MCF 10A (cell line): ENCODE measurements at regions of chr6 and their contacts with region 1.

Region 1: DNA sequence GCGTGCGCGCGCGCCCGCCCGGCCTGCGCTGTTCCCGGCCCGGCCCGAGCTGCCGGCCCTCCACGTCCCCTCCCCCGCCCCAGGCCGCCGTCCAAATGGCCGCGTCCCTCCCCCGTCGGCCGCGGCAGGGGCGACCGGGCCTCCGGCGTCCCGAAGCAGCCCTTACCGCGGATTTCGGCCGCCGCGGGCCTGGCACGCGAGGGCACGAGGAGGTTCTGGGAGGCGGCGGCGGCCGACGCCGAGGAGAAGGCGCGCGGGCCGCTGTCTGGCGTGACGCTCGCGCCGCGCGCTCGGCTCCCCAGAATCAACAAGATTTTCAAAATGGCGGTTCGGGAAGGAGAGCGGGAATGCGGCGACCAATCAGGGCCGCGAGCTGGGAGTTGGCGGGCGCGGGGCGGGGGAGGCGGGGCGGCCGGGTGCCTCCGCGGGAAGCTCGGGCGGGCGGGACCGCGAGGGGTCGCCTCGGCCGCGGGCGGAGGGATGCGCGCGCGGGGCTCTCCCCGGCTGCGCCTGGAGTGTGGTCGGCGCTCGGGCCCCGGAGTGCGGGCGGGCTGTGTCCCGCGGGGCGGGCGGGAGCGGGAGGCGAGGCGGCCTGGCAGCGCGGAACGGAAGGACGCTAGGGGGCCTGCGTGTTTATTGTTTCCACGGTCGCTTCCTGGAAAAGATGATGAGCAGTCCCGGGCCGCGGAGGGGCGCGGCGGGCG is at the start of gene DEK:
- DNase-seq: peak; percentile 83
- H3K4me3 Mint-ChIP-seq: peak within 1 kb of the TSS; percentile 96
- H3K27ac Mint-ChIP-seq: peak within 1 kb of the TSS; percentile 81
- H3K4me1 Mint-ChIP-seq: peaks cover 36% of the 10 kb centered on the region
- H3K27me3 Mint-ChIP-seq: no peaks in the 10 kb centered on the region
- CTCF ChIP-seq: peak; percentile 61
- total RNA-seq, gene DEK: 118 and 148 TPM in 2 replicates

Region 2: GRCh38 chr6:18242062-18242851 is 22.1 kb before region 1 on chr6:
- CTCF ChIA-PET with region 1: interaction called, 3 read pairs
- POLR2A ChIA-PET with region 1: interaction called, 65 read pairs
- intact Hi-C with region 1: no loop called
- DNase-seq: peak; percentile 88
- H3K4me3 Mint-ChIP-seq: no peak overlapping the region
- H3K27ac Mint-ChIP-seq: peak overlapping the region; percentile 93
- H3K4me1 Mint-ChIP-seq: peaks cover 23% of the 10 kb centered on the region
- H3K27me3 Mint-ChIP-seq: no peaks in the 10 kb centered on the region
- CTCF ChIP-seq: no peak

Region 3: DNA sequence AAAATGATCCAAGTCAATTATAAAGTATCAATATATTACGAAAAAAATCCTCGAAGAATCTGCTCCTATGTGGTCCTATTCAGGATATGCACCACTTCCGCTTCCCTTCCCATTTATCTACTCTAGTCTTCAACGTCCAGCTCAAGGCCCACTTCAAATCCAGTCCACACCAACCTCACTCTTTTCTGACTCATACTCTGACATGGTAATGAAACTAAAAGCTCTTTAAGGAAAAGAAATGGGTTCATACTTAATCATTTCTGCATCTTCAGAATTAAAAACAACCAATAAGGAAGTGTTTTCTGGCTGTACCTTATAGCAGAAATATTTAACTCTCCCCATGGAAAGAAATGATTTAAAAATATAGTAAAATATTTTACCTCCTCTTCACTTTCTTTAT is 15.1 kb before region 1 on chr6:
- CTCF ChIA-PET with region 1: no interaction called
- POLR2A ChIA-PET with region 1: interaction called, 65 read pairs
- intact Hi-C with region 1: no loop called
- DNase-seq: no peak
- H3K4me3 Mint-ChIP-seq: no peak overlapping the region
- H3K27ac Mint-ChIP-seq: no peak overlapping the region
- H3K4me1 Mint-ChIP-seq: peaks cover 10% of the 10 kb centered on the region
- H3K27me3 Mint-ChIP-seq: no peaks in the 10 kb centered on the region
- CTCF ChIP-seq: no peak

Region 4: GRCh38 chr6:18451756-18452155 is 187.4 kb after region 1 on chr6:
- CTCF ChIA-PET with region 1: no interaction called
- POLR2A ChIA-PET with region 1: no interaction called
- intact Hi-C with region 1: no loop called
- DNase-seq: peak; percentile 30
- H3K4me3 Mint-ChIP-seq: no peak overlapping the region
- H3K27ac Mint-ChIP-seq: no peak overlapping the region
- H3K4me1 Mint-ChIP-seq: peaks cover 14% of the 10 kb centered on the region
- H3K27me3 Mint-ChIP-seq: no peaks in the 10 kb centered on the region
- CTCF ChIP-seq: no peak